ENCODE measurements at regions of chr4 and their contacts with region 1.

Region 1: GRCh38 chr4:55395529-55396307 is at the start of gene TMEM165:
- DNase-seq: peak; percentile 92 to 94 (median 94)
- H3K4me3 ChIP-seq: peak within 1 kb of the TSS; percentile 89 to 96 (median 93)
- H3K4me3 Mint-ChIP-seq: peak within 1 kb of the TSS; percentile 96 to 99
- H3K27ac ChIP-seq: peak within 1 kb of the TSS; percentile 89 to 94
- H3K27ac Mint-ChIP-seq: peak within 1 kb of the TSS; percentile 98 to 100 (median 100)
- H3K4me1 ChIP-seq: peaks cover 30 to 37% of the 10 kb centered on the region in 2 donors
- H3K4me1 Mint-ChIP-seq: peaks cover 38% of the 10 kb centered on the region
- H3K27me3 ChIP-seq: no peaks in the 10 kb centered on the region
- H3K27me3 Mint-ChIP-seq: peaks cover 0 to 6% (median 0%) of the 10 kb centered on the region in 3 donors
- CTCF ChIP-seq: no peak
- polyA plus RNA-seq, gene TMEM165: 77.4 to 96.4 (median 92.8) TPM

Region 2: GRCh38 chr4:55345980-55346850 is 49.5 kb before region 1 on chr4 and contains the start of gene SRD5A3:
- intact Hi-C with region 1: loop called (anchors 5 kb)
- DNase-seq: peak; percentile 67 to 77 (median 75)
- H3K4me3 ChIP-seq: peak within 1 kb of the TSS; percentile 60 to 83 (median 72)
- H3K4me3 Mint-ChIP-seq: peak within 1 kb of the TSS; percentile 88 to 95
- H3K27ac ChIP-seq: peak within 1 kb of the TSS; percentile 88 to 93
- H3K27ac Mint-ChIP-seq: peak within 1 kb of the TSS; percentile 91 to 96 (median 96)
- H3K4me1 ChIP-seq: peaks cover 12 to 32% of the 10 kb centered on the region in 2 donors
- H3K4me1 Mint-ChIP-seq: peaks cover 21% of the 10 kb centered on the region
- H3K27me3 ChIP-seq: no peaks in the 10 kb centered on the region
- H3K27me3 Mint-ChIP-seq: peaks cover 0 to 1% (median 0%) of the 10 kb centered on the region in 3 donors
- CTCF ChIP-seq: peak; percentile 99
- polyA plus RNA-seq, gene SRD5A3: 5.9 to 26.2 (median 16.2) TPM

Region 3: DNA sequence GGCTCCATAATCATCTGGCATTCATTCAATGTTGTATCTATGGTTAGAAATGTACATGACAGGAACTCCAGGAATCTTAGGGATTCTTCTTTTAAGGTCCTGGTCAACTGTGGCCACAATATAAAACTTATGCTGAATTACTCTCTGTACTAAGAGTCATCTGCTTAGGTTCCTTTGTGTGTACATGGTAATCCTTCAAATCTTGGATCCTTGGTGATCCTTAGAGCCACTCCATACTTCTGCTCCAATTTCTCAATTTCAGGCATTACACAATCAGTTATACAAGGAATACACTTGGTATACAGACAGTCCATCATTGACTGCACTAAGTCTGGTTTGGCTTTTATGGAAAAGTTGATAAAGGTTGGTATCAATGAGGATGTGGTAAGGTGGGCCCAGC is 43.9 kb before region 1 on chr4:
- intact Hi-C with region 1: loop called (anchors 5 kb)
- DNase-seq: no peak
- H3K4me3 ChIP-seq: no peak overlapping the region
- H3K4me3 Mint-ChIP-seq: no peak overlapping the region
- H3K27ac ChIP-seq: no peak overlapping the region
- H3K27ac Mint-ChIP-seq: no peak overlapping the region
- H3K4me1 ChIP-seq: peaks cover 10 to 20% of the 10 kb centered on the region in 2 donors
- H3K4me1 Mint-ChIP-seq: peaks cover 16% of the 10 kb centered on the region
- H3K27me3 ChIP-seq: no peaks in the 10 kb centered on the region
- H3K27me3 Mint-ChIP-seq: peaks cover 0 to 1% (median 0%) of the 10 kb centered on the region in 3 donors
- CTCF ChIP-seq: no peak

Region 4: GRCh38 chr4:55546756-55547465 is 151.2 kb after region 1 on chr4 and contains the start of gene CLOCK:
- intact Hi-C with region 1: loop called (anchors 5 kb)
- DNase-seq: peak; percentile 67 to 77 (median 74)
- H3K4me3 ChIP-seq: peak within 1 kb of the TSS; percentile 48 to 96 (median 86)
- H3K4me3 Mint-ChIP-seq: peak within 1 kb of the TSS; percentile 87 to 91
- H3K27ac ChIP-seq: peak within 1 kb of the TSS; percentile 70 to 83
- H3K27ac Mint-ChIP-seq: peak within 1 kb of the TSS; percentile 82 to 94 (median 90)
- H3K4me1 ChIP-seq: peaks cover 14 to 18% of the 10 kb centered on the region in 2 donors
- H3K4me1 Mint-ChIP-seq: peaks cover 17% of the 10 kb centered on the region
- H3K27me3 ChIP-seq: peaks cover 3 to 9% of the 10 kb centered on the region in 2 donors
- H3K27me3 Mint-ChIP-seq: peaks cover 8 to 25% (median 20%) of the 10 kb centered on the region in 3 donors
- CTCF ChIP-seq: peak; percentile 53
- polyA plus RNA-seq, gene CLOCK: 1.9 to 3.7 (median 2.9) TPM